Kidney (tissue), 22 donors: ENCODE measurements at regions of chr1 and their contacts with region 1.

Region 1: DNA sequence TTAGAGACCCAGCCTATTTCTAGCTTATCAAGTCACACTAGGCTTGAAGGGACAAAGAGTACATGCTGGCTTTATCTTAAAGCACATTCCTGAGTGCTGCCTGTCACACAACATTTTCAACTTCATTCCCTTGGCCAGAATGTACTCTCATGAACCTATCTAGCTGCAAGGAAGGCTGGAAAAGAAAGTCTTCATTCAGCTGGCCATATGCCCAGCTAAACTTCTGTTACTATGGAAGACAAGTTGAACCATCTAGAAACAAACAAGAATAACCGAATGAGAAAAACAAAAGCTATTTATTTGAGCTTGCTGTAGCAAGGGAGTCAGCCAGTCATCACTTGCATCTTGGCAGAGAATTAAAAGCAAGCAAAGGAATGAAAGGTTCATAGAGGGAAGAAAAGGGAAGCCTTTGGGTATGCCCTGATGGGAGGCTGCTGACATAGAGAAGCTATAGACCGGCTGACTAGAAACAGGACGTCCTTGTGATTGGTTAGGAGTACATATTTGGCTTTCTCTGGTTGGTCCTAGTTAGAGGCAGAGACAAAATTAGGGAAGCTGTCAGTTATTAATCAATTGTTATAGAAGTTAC is 108.4 kb downstream of the NEK7 start:
- DNase-seq: no peak
- H3K4me3 ChIP-seq: no peak overlapping the region
- H3K27ac ChIP-seq: no peak overlapping the region
- H3K4me1 ChIP-seq: peaks cover 0 to 5% (median 0%) of the 10 kb centered on the region in 3 donors
- H3K27me3 ChIP-seq: no peaks in the 10 kb centered on the region
- CTCF ChIP-seq: no peak

Region 2: GRCh38 chr1:198113342-198113750 is 151.8 kb before region 1 on chr1:
- intact Hi-C with region 1: no loop called
- DNase-seq: no peak
- H3K4me3 ChIP-seq: no peak overlapping the region
- H3K27ac ChIP-seq: no peak overlapping the region
- H3K4me1 ChIP-seq: no peaks in the 10 kb centered on the region
- H3K27me3 ChIP-seq: no peaks in the 10 kb centered on the region
- CTCF ChIP-seq: no peak

Region 3: GRCh38 chr1:198187973-198188588 is 77.1 kb before region 1 on chr1:
- intact Hi-C with region 1: loop called (anchors 10 kb)
- DNase-seq: no peak
- H3K4me3 ChIP-seq: no peak overlapping the region
- H3K27ac ChIP-seq: no peak overlapping the region
- H3K4me1 ChIP-seq: peaks cover 0 to 6% (median 3%) of the 10 kb centered on the region in 3 donors
- H3K27me3 ChIP-seq: no peaks in the 10 kb centered on the region
- CTCF ChIP-seq: no peak